ENCODE measurements at regions of chr17 and their contacts with region 1.

Region 1: DNA sequence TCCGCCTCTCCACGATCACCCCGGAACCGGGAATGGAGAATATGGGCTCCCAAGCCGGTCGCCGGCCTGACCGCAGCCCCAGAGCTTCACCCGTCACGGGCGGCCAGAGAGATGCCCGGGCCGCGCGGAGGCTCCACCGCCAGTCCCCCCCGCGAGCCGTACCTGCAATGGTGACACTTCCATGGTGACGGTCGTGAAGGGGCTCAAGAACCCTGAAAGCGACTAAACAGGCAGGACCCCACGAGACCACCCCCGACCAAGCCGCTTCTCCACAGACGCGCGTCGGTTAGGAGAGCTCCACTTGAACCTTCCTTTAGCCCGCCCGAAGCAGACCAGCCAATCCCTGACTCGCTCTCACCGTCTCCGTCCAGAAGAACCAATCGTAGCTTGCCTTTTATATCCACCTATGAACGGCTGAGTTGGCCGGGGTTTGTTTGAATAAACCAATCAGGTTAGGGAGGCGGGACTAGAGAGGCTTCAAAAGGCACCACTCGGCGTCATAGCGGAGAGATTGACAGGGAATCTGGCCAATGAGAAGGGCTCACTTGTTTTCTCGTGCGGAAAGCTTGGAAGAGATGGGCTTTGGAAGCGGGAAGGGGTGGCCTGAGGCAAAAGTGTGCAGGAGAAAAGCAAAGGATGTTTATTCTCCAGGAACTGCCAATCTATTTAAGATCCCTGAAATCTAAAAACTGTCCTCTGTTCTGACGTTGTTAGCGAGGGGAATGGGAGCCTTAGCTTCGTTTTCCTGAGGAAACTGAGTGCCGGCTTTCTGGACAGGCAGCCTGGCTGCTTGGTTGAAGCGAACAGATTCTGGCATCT is at the start of gene TOP2A:
- DNase-seq: peak; percentile 90
- H3K4me3 ChIP-seq: peak within 1 kb of the TSS; percentile 72
- H3K27ac ChIP-seq: peak within 1 kb of the TSS; percentile 56
- H3K4me1 ChIP-seq: peaks cover 17% of the 10 kb centered on the region
- H3K27me3 ChIP-seq: peaks cover 10% of the 10 kb centered on the region
- CTCF ChIP-seq: no peak
- total RNA-seq, gene TOP2A: 2.1 TPM

Region 2: DNA sequence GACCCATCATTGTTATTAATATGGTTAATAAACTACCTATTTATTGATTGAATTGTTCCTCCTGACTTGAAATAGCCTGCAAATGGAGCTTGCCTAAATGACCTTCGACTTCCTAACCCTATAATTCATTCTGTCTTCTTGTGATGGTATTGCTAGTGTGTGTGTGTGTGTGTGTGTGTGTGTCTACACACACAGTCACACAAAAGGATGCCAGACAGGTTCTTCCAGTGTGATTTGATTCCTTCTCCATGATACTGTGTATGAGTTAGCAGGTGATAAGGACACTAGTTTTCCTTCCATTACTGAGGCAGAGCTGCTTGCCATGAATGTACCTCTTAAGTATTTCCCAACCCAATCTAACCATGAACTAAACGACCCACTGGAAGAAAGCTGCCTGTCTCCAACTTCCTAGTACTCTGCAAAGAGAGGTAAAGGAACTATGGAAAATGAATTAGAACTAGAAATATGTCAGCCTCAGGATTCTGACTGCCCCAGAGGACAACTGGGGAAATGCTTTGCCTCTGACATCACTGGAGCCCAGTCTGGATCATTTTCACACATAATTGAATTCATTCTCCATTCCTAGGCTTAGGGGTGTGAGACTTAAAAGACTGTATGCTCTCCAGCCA is 133.6 kb before region 1 on chr17:
- intact Hi-C with region 1: no loop called
- DNase-seq: no peak
- H3K4me3 ChIP-seq: no peak overlapping the region
- H3K27ac ChIP-seq: peak overlapping the region; percentile 59
- H3K4me1 ChIP-seq: peaks cover 40% of the 10 kb centered on the region
- H3K27me3 ChIP-seq: no peaks in the 10 kb centered on the region
- CTCF ChIP-seq: peak; percentile 34

Region 3: GRCh38 chr17:40358323-40359038 is 59.3 kb before region 1 on chr17:
- intact Hi-C with region 1: loop called (anchors 10 kb)
- DNase-seq: peak; percentile 90
- H3K4me3 ChIP-seq: peak overlapping the region; percentile 18
- H3K27ac ChIP-seq: peak overlapping the region; percentile 63
- H3K4me1 ChIP-seq: peaks cover 40% of the 10 kb centered on the region
- H3K27me3 ChIP-seq: peaks cover 15% of the 10 kb centered on the region
- CTCF ChIP-seq: peak; percentile 99

Region 4: GRCh38 chr17:40371261-40371929 is 46.4 kb before region 1 on chr17:
- intact Hi-C with region 1: no loop called
- DNase-seq: no peak
- H3K4me3 ChIP-seq: no peak overlapping the region
- H3K27ac ChIP-seq: no peak overlapping the region
- H3K4me1 ChIP-seq: no peaks in the 10 kb centered on the region
- H3K27me3 ChIP-seq: peaks cover 11% of the 10 kb centered on the region
- CTCF ChIP-seq: no peak

Measured in left ventricle myocardium inferior (tissue), 1 donor.